MCF 10A (cell line): ENCODE measurements at regions of chr1 and their contacts with region 1.

Region 1: DNA sequence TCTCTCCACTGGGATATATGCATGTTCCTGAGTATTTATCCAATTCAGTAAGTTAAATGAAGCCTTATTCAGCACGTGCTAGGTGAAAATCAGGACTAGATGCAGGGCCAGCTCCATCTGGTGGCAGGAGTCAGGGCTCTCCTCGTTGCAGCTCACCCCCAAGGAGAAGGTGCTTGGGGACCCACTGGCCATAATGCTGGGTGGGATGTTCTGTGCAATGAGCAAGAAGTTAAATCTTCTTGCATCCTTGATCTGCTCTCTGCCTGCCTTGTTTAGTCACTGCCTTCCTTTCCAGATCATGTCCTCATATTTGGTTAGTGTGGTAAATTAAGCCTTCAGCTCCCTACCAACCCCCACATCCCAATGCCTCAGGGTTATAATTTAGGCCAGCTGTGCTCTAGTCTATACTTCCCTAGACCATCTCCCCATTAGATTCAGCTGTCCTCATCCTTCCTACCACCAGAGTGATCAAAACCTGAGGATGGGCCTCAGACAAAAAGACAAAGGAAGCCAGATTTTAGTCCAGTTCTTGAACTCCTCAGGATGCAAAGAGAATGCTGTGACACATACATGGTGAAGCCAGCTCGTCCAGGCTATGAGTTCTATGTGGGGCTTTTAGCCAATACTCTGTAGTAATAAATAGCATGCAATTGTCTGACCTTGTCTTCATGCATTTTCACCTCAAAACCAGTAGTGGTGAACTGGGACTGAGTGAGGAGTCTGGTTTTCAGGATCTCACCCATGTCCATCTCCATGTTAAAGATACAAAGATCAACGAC is 55.9 kb downstream of the SEC16B start:
- DNase-seq: peak; percentile 48
- H3K4me3 Mint-ChIP-seq: no peak overlapping the region
- H3K27ac Mint-ChIP-seq: no peak overlapping the region
- H3K4me1 Mint-ChIP-seq: no peaks in the 10 kb centered on the region
- H3K27me3 Mint-ChIP-seq: no peaks in the 10 kb centered on the region
- CTCF ChIP-seq: peak; percentile 48

Region 2: GRCh38 chr1:177928194-177928593 is 14.2 kb after region 1 on chr1:
- CTCF ChIA-PET with region 1: interaction called, 55 read pairs
- POLR2A ChIA-PET with region 1: interaction called, 5 read pairs
- intact Hi-C with region 1: no loop called
- DNase-seq: no peak
- H3K4me3 Mint-ChIP-seq: no peak overlapping the region
- H3K27ac Mint-ChIP-seq: no peak overlapping the region
- H3K4me1 Mint-ChIP-seq: peaks cover 13% of the 10 kb centered on the region
- H3K27me3 Mint-ChIP-seq: no peaks in the 10 kb centered on the region
- CTCF ChIP-seq: no peak

Region 3: GRCh38 chr1:178023181-178023618 is 109.2 kb after region 1 on chr1:
- CTCF ChIA-PET with region 1: no interaction called
- POLR2A ChIA-PET with region 1: no interaction called
- intact Hi-C with region 1: no loop called
- DNase-seq: no peak
- H3K4me3 Mint-ChIP-seq: no peak overlapping the region
- H3K27ac Mint-ChIP-seq: no peak overlapping the region
- H3K4me1 Mint-ChIP-seq: no peaks in the 10 kb centered on the region
- H3K27me3 Mint-ChIP-seq: no peaks in the 10 kb centered on the region
- CTCF ChIP-seq: no peak